ENCODE measurements at regions of chr14 and their contacts with region 1.

Region 1: DNA sequence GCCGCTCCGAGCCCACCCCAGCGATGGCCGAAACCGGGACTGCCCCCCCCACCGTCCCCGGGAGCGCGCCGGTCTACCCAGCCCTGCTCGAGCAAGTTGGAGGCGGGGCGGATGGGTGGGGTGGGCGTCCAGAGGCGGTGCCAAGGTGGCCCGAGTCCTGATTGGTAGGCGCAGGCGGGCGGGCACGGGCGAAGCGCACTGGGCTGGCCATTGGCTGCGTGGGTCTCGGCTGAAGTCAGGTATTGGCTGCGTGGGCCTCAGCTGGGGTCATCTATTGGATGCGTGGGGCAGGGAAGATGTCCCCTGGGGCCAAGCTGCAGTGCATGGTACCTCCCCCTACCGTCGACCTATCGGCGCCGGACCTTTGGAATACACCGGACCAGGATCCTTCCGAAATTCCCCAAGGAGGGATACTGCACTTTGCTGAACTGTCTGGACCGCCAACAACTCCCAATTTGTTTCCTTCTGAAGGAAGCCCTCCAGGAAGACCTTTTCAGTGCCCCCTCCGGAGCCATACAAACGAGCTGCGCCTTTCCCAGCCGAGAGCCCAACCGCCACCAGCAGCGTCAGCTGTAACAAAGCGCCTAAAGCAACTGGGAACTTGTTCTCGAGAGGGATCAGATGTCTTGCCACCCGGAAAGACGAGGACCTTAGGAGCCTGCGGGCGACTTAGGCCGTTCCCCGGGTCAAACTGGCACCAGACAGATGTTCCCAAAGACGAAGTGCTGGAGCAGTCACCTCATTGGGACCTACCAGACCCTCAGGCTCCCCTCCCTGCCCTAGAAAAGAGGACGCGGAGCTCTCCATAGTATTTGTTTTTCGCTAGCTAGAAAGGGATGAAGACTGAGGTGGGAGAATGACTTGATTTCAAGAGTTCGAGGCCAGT is at the start of gene HOMEZ:
- DNase-seq: peak; percentile 89 to 96
- H3K4me3 ChIP-seq: peak within 1 kb of the TSS; percentile 69 to 98 (median 78)
- H3K27ac ChIP-seq: no peak within 1 kb of the TSS
- H3K4me1 ChIP-seq: no peaks in the 10 kb centered on the region
- H3K27me3 ChIP-seq: peaks cover 9 to 32% (median 28%) of the 10 kb centered on the region in 4 experiments
- CTCF ChIP-seq: peak in 1 of 3 experiments; percentile 17; a peak in 1 of 4 replicates
- EP300 ChIP-seq: no peak
- POLR2A ChIP-seq: peak in 1 of 2 experiments; percentile 50; a peak in 1 of 3 replicates
- RAD21 ChIP-seq: no peak
- total RNA-seq, gene HOMEZ: 9.1 and 9.7 TPM in 2 replicates

Region 2: DNA sequence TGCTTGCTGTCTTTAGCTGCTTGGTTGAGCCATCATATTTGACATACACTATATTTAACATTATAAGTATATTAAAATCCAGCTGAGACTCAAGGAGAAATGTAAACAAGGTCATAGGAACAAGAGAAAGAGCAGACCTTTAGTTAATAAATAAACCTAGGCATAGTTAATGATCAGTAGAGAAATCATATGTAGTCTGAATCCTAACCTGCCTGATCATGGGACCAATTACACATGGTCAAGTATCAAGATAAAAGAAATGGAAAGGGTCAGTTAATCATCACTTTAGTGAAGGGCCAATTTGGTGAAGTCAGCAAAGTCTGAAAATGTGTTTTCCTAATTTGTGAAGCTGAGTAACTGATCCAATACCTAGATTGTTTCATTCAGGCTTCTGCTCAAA is 41.0 kb before region 1 on chr14:
- CTCF ChIA-PET with region 1: no interaction called
- POLR2A ChIA-PET with region 1: no interaction called
- DNase-seq: no peak
- H3K4me3 ChIP-seq: no peak overlapping the region
- H3K27ac ChIP-seq: no peak overlapping the region
- H3K4me1 ChIP-seq: peaks cover 0 to 4% (median 2%) of the 10 kb centered on the region in 4 experiments; a peak in 3 of 7 replicates
- H3K27me3 ChIP-seq: no peaks in the 10 kb centered on the region
- CTCF ChIP-seq: no peak
- EP300 ChIP-seq: no peak
- POLR2A ChIP-seq: no peak
- RAD21 ChIP-seq: no peak

Region 3: DNA sequence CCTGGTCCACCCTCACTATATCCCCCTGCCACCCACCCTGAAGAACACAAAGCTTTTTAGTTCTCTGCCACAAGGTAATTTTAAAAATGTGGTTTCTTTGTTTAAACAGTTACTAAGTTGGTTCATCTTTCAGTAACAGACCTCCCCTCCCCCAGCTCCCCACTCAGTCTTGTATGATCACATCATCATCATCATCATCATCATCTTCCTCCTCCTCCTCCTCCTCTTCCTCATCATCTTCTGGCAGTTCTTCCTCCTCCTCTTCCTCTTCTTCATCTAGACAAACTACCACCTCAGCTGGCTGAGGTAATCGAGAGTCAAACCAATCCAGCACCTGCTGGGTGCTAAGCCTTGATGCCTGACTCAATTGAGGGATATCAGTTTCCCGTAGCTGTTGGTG is 10.9 kb before region 1 on chr14:
- CTCF ChIA-PET with region 1: interaction called, 10 read pairs
- POLR2A ChIA-PET with region 1: interaction called, 11 read pairs
- DNase-seq: no peak
- H3K4me3 ChIP-seq: no peak overlapping the region
- H3K27ac ChIP-seq: no peak overlapping the region
- H3K4me1 ChIP-seq: peaks cover 2 to 7% (median 5%) of the 10 kb centered on the region in 4 experiments; a peak in 4 of 7 replicates
- H3K27me3 ChIP-seq: peaks cover 0 to 16% (median 8%) of the 10 kb centered on the region in 4 experiments; a peak in 5 of 7 replicates
- CTCF ChIP-seq: no peak
- EP300 ChIP-seq: no peak
- POLR2A ChIP-seq: no peak
- RAD21 ChIP-seq: no peak